Dorsolateral prefrontal cortex (tissue), 120 donors: ENCODE measurements at regions of chr3 and their contacts with region 1.

Region 1: GRCh38 chr3:57100046-57100695 is 39.7 kb downstream of the SPATA12 start:
- DNase-seq: peak in 8 of 10 donors; percentile 50 to 80 (median 68)
- H3K4me3 ChIP-seq: no peak overlapping the region
- H3K27ac ChIP-seq: no peak overlapping the region
- H3K27me3 ChIP-seq: no peaks in the 10 kb centered on the region
- CTCF ChIP-seq: peak; percentile 80 to 98 (median 92)

Region 2: GRCh38 chr3:57169872-57170623 is 69.9 kb after region 1 on chr3:
- intact Hi-C with region 1: loop called in 1 of 2 experiments (anchors 2 kb)
- DNase-seq: peak in 9 of 10 donors; percentile 44 to 79 (median 64)
- H3K4me3 ChIP-seq: peak overlapping the region; percentile 23 to 69 (median 51)
- H3K27ac ChIP-seq: peak overlapping the region in 3 of 59 donors; percentile 8 to 52 (median 17)
- H3K27me3 ChIP-seq: peaks cover 0 to 12% (median 0%) of the 10 kb centered on the region in 45 donors
- CTCF ChIP-seq: peak; percentile 66 to 90 (median 84)